Esophagus muscularis mucosa (tissue), 4 donors: ENCODE measurements at regions of chr9 and their contacts with region 1.

Region 1: GRCh38 chr9:124126571-124127289 is 115.2 kb downstream of the LHX2 start:
- DNase-seq: no peak
- H3K4me3 ChIP-seq: no peak overlapping the region
- H3K27ac ChIP-seq: no peak overlapping the region
- H3K4me1 ChIP-seq: no peaks in the 10 kb centered on the region
- H3K27me3 ChIP-seq: peaks cover 0 to 28% (median 0%) of the 10 kb centered on the region in 4 donors
- CTCF ChIP-seq: peak in 2 of 3 experiments; percentile 91 to 99
- EP300 ChIP-seq: no peak
- POLR2A ChIP-seq: no peak

Region 2: GRCh38 chr9:124320062-124320973 is 193.6 kb after region 1 on chr9:
- intact Hi-C with region 1: loop called (anchors 1 kb)
- DNase-seq: no peak
- H3K4me3 ChIP-seq: no peak overlapping the region
- H3K27ac ChIP-seq: no peak overlapping the region
- H3K4me1 ChIP-seq: peaks cover 8 to 11% (median 10%) of the 10 kb centered on the region in 4 donors
- H3K27me3 ChIP-seq: no peaks in the 10 kb centered on the region
- CTCF ChIP-seq: peak; percentile 79 to 92 (median 86)
- EP300 ChIP-seq: no peak
- POLR2A ChIP-seq: no peak